ENCODE measurements at regions of chr3 and their contacts with region 1.

Region 1: GRCh38 chr3:178518660-178519396 is 17.4 kb upstream of the KCNMB2 start:
- DNase-seq: peak; percentile 95
- ATAC-seq: peak; percentile 74
- H3K4me3 ChIP-seq: peak overlapping the region; percentile 48
- H3K27ac ChIP-seq: peak overlapping the region; percentile 97
- H3K4me1 ChIP-seq: peaks cover 83% of the 10 kb centered on the region
- H3K27me3 ChIP-seq: no peaks in the 10 kb centered on the region
- CTCF ChIP-seq: no peak
- EP300 ChIP-seq: peak; percentile 79; a peak in 3 of 4 replicates
- POLR2A ChIP-seq: peak; percentile 82
- RAD21 ChIP-seq: peak; percentile 18; the same call in 1 of the 2 replicates

Region 2: GRCh38 chr3:178436773-178437172 is 82.1 kb before region 1 on chr3:
- CTCF ChIA-PET with region 1: interaction called, 8 read pairs
- POLR2A ChIA-PET with region 1: no interaction called
- RAD21 ChIA-PET with region 1: interaction called, 11 read pairs
- SMC1A ChIA-PET with region 1: interaction called, 4 read pairs
- in situ Hi-C with region 1: no loop called
- intact Hi-C with region 1: loop called (anchors 1 kb)
- DNase-seq: no peak
- ATAC-seq: peak; percentile 80
- H3K4me3 ChIP-seq: no peak overlapping the region
- H3K27ac ChIP-seq: no peak overlapping the region
- H3K4me1 ChIP-seq: peaks cover 5% of the 10 kb centered on the region
- H3K27me3 ChIP-seq: no peaks in the 10 kb centered on the region
- CTCF ChIP-seq: peak; percentile 28 to 57 (median 51); a peak in 5 of 6 replicates
- EP300 ChIP-seq: no peak
- POLR2A ChIP-seq: no peak
- RAD21 ChIP-seq: peak; percentile 74

Region 3: DNA sequence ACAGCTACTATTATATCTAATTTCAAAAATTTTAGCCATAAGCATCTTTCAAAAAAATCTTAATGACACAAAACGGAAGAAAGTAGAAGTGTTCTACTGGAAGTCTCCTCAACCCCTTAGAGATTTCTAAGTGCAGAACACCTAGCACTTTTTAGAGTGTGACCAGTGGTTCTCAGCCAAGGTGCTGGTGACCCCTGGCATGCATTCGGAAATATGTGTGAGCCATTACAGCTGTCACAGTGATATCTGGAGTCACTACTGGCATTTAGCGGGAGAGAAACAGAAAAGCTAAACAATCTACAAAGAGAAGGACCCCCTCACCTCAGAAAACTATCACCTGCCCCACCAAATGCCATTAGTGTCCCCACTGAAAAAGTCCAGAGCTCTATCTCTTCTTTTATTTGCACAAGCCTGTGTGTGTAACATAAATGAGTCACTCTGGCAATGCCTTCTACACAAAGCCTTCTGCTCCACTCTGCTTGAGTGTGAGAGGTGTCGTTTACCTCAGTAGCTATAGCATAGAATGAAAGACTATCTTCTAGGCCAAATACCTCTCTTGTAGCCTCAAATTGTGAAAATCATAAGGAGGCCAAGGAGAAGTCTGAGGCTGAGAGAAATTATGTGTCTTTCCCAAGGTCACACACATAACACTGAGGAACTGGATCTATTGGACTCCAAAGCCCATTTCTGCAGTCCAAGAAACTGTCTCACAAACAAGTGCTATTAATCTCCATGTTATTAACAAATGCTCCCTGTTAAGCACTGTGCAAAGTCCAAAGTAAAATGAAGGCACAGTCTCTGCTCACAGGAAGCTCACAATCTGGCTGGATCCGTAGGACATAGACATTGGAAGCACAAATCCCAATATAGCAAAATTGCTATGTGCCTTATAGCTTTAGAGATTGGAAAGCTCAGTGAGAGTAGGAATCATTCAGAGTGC is 11.1 kb before region 1 on chr3:
- CTCF ChIA-PET with region 1: interaction called, 4 read pairs
- POLR2A ChIA-PET with region 1: interaction called, 4 read pairs
- RAD21 ChIA-PET with region 1: interaction called, 3 read pairs
- SMC1A ChIA-PET with region 1: interaction called, 11 read pairs
- in situ Hi-C with region 1: no loop called
- intact Hi-C with region 1: no loop called
- DNase-seq: no peak
- ATAC-seq: no peak
- H3K4me3 ChIP-seq: no peak overlapping the region
- H3K27ac ChIP-seq: no peak overlapping the region
- H3K4me1 ChIP-seq: peaks cover under 1% of the 10 kb centered on the region; the same call in 1 of the 2 replicates
- H3K27me3 ChIP-seq: no peaks in the 10 kb centered on the region
- CTCF ChIP-seq: no peak
- EP300 ChIP-seq: no peak
- POLR2A ChIP-seq: no peak
- RAD21 ChIP-seq: no peak

Region 4: GRCh38 chr3:178671791-178672190 is 153.0 kb after region 1 on chr3:
- CTCF ChIA-PET with region 1: interaction called, 3 read pairs
- POLR2A ChIA-PET with region 1: no interaction called
- RAD21 ChIA-PET with region 1: no interaction called
- SMC1A ChIA-PET with region 1: interaction called, 6 read pairs
- in situ Hi-C with region 1: no loop called
- intact Hi-C with region 1: loop called (anchors 5 kb)
- DNase-seq: no peak
- ATAC-seq: peak; percentile 36
- H3K4me3 ChIP-seq: no peak overlapping the region
- H3K27ac ChIP-seq: no peak overlapping the region
- H3K4me1 ChIP-seq: peaks cover 35% of the 10 kb centered on the region
- H3K27me3 ChIP-seq: no peaks in the 10 kb centered on the region
- CTCF ChIP-seq: no peak
- EP300 ChIP-seq: no peak
- POLR2A ChIP-seq: no peak
- RAD21 ChIP-seq: no peak

Region 5: GRCh38 chr3:179336345-179336929 is 817.6 kb after region 1 on chr3:
- CTCF ChIA-PET with region 1: no interaction called
- POLR2A ChIA-PET with region 1: no interaction called
- RAD21 ChIA-PET with region 1: no interaction called
- SMC1A ChIA-PET with region 1: no interaction called
- in situ Hi-C with region 1: no loop called
- intact Hi-C with region 1: no loop called
- DNase-seq: no peak
- ATAC-seq: no peak
- H3K4me3 ChIP-seq: no peak overlapping the region
- H3K27ac ChIP-seq: no peak overlapping the region
- H3K4me1 ChIP-seq: no peaks in the 10 kb centered on the region
- H3K27me3 ChIP-seq: no peaks in the 10 kb centered on the region
- CTCF ChIP-seq: no peak
- EP300 ChIP-seq: no peak
- POLR2A ChIP-seq: no peak
- RAD21 ChIP-seq: no peak

Region 6: DNA sequence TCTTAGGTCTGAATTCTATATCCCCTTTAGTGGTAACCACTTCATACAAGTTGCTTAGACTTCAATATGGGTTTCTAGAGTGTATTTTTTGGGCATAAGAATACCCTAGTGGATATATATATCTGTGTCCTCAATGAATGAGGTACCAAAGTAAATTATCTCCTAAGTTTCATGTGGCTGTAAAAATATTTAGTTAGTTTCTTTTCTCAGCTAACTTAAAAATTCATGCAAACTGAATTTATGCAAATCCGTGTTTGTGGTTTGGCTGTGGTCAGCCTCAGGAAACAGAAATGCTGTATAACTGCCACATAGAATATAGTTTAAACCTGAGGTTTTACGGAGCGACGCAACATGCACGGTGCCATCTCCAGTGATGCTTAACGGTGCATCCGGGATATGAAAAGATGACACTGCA is 1437.6 kb after region 1 on chr3:
- CTCF ChIA-PET with region 1: no interaction called
- POLR2A ChIA-PET with region 1: no interaction called
- RAD21 ChIA-PET with region 1: no interaction called
- SMC1A ChIA-PET with region 1: no interaction called
- in situ Hi-C with region 1: loop called (anchors 25 kb)
- intact Hi-C with region 1: no loop called
- DNase-seq: peak; percentile 96
- ATAC-seq: peak; percentile 91
- H3K4me3 ChIP-seq: peak overlapping the region; percentile 4; the same call in 1 of the 2 replicates
- H3K27ac ChIP-seq: peak overlapping the region; percentile 70
- H3K4me1 ChIP-seq: peaks cover 27% of the 10 kb centered on the region
- H3K27me3 ChIP-seq: no peaks in the 10 kb centered on the region
- CTCF ChIP-seq: no peak
- EP300 ChIP-seq: peak; percentile 89 to 98
- POLR2A ChIP-seq: no peak
- RAD21 ChIP-seq: no peak

Measured in GM12878 (cell line).